Aorta (tissue), 5 donors: ENCODE measurements at regions of chr7 and their contacts with region 1.

Region 1: GRCh38 chr7:6272481-6273323 is at the start of gene CYTH3:
- DNase-seq: peak; percentile 84 to 92
- ATAC-seq: peak; percentile 94
- H3K4me3 ChIP-seq: peak within 1 kb of the TSS; percentile 91 to 98
- H3K27ac ChIP-seq: peak within 1 kb of the TSS in 1 of 2 donors; percentile 36
- H3K4me1 ChIP-seq: no peaks in the 10 kb centered on the region
- H3K27me3 ChIP-seq: no peaks in the 10 kb centered on the region
- total RNA-seq, gene CYTH3: 60.5 to 63.7 TPM

Region 2: GRCh38 chr7:4797858-4798705 is 1474.6 kb before region 1 on chr7:
- intact Hi-C with region 1: no loop called
- DNase-seq: peak in 1 of 2 donors; percentile 88
- ATAC-seq: peak; percentile 81
- H3K4me3 ChIP-seq: no peak overlapping the region
- H3K27ac ChIP-seq: no peak overlapping the region
- H3K4me1 ChIP-seq: no peaks in the 10 kb centered on the region
- H3K27me3 ChIP-seq: no peaks in the 10 kb centered on the region

Region 3: DNA sequence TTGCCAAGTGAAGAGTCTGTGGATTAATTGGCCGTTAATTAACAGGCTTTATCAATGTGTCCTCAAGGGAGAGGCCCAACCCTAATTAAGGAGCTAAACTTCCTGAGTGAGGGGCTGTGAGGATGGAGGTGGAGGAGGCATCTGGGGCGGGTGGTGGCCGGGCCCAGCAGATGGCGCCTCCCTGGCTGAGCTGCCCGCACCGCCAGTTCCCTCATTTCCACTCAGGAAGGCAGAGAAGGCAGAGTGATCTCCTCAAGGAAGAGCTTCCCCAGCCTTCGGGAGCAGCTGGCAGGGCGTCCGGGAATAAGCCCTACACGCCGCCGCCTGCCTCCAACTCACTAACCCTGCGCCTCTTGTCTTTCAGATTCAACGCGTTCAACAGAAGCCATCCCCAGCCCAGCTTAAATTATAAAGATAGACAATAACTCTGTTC is 112.5 kb before region 1 on chr7:
- intact Hi-C with region 1: loop called (anchors 2 to 5 kb)
- DNase-seq: peak; percentile 77 to 90
- ATAC-seq: peak; percentile 74
- H3K4me3 ChIP-seq: no peak overlapping the region
- H3K27ac ChIP-seq: no peak overlapping the region
- H3K4me1 ChIP-seq: no peaks in the 10 kb centered on the region
- H3K27me3 ChIP-seq: no peaks in the 10 kb centered on the region

Region 4: DNA sequence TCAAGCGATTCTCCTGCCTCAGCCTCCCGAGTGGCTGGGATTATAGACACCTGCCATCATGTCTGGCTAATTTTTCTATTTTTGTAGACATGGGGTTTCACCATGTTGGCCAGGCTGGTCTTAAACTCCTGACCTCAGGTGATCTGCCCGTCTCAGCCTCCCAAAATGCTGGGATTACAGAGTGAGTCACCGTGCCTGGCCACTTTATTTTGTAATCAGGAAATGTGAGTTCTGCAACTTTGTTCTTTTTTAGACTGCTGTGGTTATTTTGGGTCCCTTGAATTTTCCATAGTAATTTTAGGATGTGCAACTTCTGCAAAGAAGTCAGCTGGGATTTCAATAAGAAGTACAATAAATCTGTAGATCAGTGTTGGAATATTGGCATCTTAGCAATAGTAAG is 97.1 kb before region 1 on chr7:
- intact Hi-C with region 1: loop called in 1 of 2 experiments (anchors 5 kb)
- DNase-seq: peak in 1 of 2 donors; percentile 67
- ATAC-seq: no peak
- H3K4me3 ChIP-seq: no peak overlapping the region
- H3K27ac ChIP-seq: no peak overlapping the region
- H3K4me1 ChIP-seq: peaks cover 4 to 5% of the 10 kb centered on the region in 2 donors
- H3K27me3 ChIP-seq: no peaks in the 10 kb centered on the region

Region 5: DNA sequence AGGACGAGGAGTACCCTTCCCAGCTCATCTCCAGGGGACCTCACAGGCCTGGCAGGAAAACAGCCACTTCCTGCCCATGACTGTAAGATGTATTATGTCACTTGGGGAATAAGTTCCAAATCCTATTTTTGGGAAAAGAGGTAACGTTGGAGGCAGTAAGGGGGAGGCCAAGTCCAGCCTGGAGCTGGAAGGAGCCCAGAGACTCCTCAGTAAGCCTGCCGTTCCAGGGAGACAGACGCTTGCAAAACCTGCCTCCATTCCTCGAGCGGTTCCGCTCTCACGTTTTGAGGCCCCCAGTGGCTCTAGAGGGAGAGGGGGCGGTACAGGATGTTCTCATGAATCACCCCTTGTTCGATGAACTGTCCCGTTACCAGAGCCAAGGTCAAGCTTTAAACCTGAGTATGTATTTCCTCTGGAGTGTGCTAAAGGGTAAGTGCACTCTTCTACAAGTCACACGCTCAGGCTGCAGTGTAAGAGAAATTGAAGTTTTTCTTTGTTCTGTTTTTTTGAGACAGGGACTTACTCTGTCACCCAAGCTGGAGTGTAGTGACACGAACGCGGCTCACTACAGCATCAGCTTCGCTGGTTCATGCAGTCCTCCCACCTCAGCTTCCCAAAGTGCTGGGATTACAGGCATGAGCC is 45.2 kb after region 1 on chr7:
- intact Hi-C with region 1: loop called (anchors 1 to 5 kb)
- DNase-seq: peak; percentile 84 to 92
- ATAC-seq: peak; percentile 85
- H3K4me3 ChIP-seq: no peak overlapping the region
- H3K27ac ChIP-seq: peak overlapping the region; percentile 74 to 86
- H3K4me1 ChIP-seq: no peaks in the 10 kb centered on the region
- H3K27me3 ChIP-seq: no peaks in the 10 kb centered on the region

Region 6: DNA sequence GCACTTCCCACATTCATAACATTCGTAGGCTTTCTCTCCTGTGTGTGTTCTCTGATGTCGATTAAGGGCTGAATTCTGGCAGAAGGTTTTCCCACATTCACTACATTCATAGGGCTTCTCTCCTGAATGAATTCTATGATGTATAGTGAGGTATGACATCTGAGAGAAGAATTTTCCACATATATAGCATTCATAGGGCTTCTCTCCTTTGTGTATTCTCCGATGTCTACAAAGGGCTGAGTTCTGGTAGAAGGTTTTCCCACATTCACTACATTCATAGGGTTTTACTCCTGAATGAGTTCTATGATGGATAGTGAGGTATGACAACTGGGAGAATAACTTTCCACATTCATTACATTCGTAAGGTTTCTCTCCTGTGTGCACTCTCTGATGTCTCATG is 418.4 kb after region 1 on chr7:
- intact Hi-C with region 1: no loop called
- DNase-seq: no peak
- ATAC-seq: no peak
- H3K4me3 ChIP-seq: no peak overlapping the region
- H3K27ac ChIP-seq: no peak overlapping the region
- H3K4me1 ChIP-seq: no peaks in the 10 kb centered on the region
- H3K27me3 ChIP-seq: no peaks in the 10 kb centered on the region